ENCODE measurements at regions of chrX and their contacts with region 1.

Region 1: DNA sequence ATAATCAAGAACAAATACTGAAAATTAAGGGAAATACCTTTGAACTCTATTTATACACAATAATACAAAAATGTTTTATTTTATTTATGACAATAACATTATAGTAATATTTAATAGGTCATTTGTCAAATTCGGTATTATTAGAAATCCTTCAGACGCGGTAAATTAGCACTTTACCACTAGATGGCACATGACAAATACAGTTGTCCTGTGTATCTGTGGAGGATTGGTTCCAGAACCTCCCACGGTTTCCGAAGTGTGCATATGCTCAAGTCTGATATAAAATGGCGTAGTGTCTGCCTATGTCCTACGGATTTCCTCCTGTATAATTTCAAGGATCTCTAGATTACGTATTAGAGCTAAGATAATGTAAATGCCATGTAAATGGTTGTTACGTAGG is 8.1 kb upstream of the LINC00632 start:
- DNase-seq: no peak
- H3K4me3 ChIP-seq: no peak overlapping the region
- H3K27ac ChIP-seq: no peak overlapping the region
- H3K27me3 ChIP-seq: no peaks in the 10 kb centered on the region
- CTCF ChIP-seq: peak; percentile 37

Region 2: DNA sequence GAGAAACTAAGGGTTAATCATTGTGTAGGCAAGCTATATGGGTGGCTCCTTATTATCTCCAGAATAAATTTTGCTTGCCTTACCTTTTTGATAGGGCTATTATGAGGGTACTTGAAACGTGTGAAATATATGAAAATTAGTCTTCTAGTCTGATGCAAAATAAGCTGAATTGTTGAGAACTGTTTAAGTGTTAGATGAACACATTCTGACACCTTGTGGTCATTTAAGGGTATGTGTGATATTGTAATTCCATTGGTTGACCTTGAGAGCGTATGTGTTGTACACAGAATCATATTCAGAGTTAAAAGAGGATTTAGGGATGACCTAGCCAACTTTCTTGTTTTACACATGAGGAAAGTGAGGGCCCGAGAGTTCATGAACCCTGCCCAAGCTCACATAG is 36.5 kb before region 1 on chrX:
- CTCF ChIA-PET with region 1: no interaction called
- POLR2A ChIA-PET with region 1: no interaction called
- DNase-seq: no peak
- H3K4me3 ChIP-seq: no peak overlapping the region
- H3K27ac ChIP-seq: no peak overlapping the region
- H3K27me3 ChIP-seq: no peaks in the 10 kb centered on the region
- CTCF ChIP-seq: 0 out of 2 replicates have a peak, but pooled peaks have one; percentile 22

Region 3: GRCh38 chrX:140733769-140734342 is 32.4 kb after region 1 on chrX:
- CTCF ChIA-PET with region 1: interaction called, 14 read pairs
- POLR2A ChIA-PET with region 1: no interaction called
- DNase-seq: no peak
- H3K4me3 ChIP-seq: no peak overlapping the region
- H3K27ac ChIP-seq: no peak overlapping the region
- H3K27me3 ChIP-seq: no peaks in the 10 kb centered on the region
- CTCF ChIP-seq: peak; percentile 72